MCF 10A (cell line): ENCODE measurements at regions of chr10 and their contacts with region 1.

Region 1: DNA sequence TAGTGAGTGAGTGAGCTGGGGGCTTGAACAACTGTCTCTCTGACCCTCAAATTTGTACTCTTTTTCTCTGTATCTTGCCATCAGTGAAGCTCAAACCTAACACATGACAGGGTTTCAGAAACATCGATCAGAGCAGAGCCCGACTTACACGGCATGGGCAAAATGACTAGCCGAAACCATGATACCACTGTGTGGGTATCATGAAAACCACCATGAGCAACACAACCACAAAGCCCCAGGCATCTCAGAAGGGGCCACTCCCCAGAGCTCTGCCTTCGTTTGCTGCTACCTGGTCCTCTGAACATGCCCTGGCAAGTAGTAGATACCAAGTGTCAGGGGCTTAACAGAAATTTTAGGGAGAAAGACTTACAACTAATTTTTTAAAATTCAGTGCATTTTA is 308.5 kb downstream of the WDR11 start:
- DNase-seq: peak; percentile 31
- H3K4me3 Mint-ChIP-seq: no peak overlapping the region
- H3K27ac Mint-ChIP-seq: no peak overlapping the region
- H3K4me1 Mint-ChIP-seq: peaks cover 11% of the 10 kb centered on the region
- H3K27me3 Mint-ChIP-seq: no peaks in the 10 kb centered on the region
- CTCF ChIP-seq: no peak

Region 2: GRCh38 chr10:121879476-121879875 is 719.8 kb after region 1 on chr10:
- CTCF ChIA-PET with region 1: no interaction called
- POLR2A ChIA-PET with region 1: no interaction called
- intact Hi-C with region 1: loop called (anchors 5 kb)
- DNase-seq: no peak
- H3K4me3 Mint-ChIP-seq: no peak overlapping the region
- H3K27ac Mint-ChIP-seq: no peak overlapping the region
- H3K4me1 Mint-ChIP-seq: peaks cover 5% of the 10 kb centered on the region
- H3K27me3 Mint-ChIP-seq: no peaks in the 10 kb centered on the region
- CTCF ChIP-seq: no peak